Heart right ventricle (tissue), 16 donors: ENCODE measurements at regions of chr12 and their contacts with region 1.

Region 1: GRCh38 chr12:92466391-92467305 is 236.1 kb upstream of the PLEKHG7 start:
- DNase-seq: peak in 1 of 2 donors; percentile 14
- ATAC-seq: peak in 5 of 8 donors; percentile 15 to 53 (median 27)
- H3K4me3 ChIP-seq: no peak overlapping the region
- H3K27ac ChIP-seq: peak overlapping the region in 5 of 10 donors; percentile 24 to 46 (median 28)
- H3K4me1 ChIP-seq: peaks cover 7 to 42% (median 30%) of the 10 kb centered on the region in 9 donors
- H3K27me3 ChIP-seq: no peaks in the 10 kb centered on the region
- CTCF ChIP-seq: no peak

Region 2: DNA sequence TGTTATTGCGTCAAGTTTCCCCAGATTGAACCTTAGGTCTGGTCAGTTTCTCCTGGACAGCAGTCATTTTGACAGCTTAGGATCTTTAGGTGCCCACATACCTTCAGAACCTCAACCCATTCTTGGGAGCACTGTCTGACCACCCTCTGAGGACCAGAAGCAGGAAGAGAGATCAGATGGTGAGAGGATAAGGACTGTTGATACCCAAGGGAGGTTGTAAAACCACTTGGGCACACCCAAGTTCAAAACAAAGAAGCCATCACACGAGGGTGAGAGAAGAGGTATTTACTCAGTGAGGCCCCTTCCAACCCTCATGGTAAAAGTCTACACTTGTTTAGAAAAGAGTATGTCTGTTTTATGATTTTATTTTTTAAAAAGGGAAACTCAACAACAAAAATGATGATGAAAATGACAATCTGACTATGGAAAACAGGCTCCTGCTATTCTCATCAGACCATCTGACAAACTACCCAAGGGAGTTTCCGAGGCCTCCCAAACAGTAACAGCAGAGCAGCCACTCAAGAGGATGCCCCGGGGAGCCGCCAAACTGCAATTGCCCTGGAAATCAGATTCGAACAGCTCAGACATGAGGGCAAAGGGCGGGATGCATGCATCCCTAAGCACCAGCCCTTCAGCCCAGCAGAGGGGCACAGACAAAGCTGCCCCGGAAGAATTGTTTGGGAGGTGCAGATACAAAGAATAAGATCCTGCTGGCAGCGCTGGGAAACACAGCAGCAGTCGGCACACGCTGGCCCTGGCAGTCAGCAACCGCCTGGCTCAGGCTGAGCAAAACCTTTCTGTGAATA is 73.5 kb after region 1 on chr12:
- intact Hi-C with region 1: loop called in 1 of 10 experiments (anchors 5 kb)
- DNase-seq: peak; percentile 26 to 42
- ATAC-seq: peak in 7 of 8 donors; percentile 43 to 65 (median 46)
- H3K4me3 ChIP-seq: no peak overlapping the region
- H3K27ac ChIP-seq: peak overlapping the region in 9 of 10 donors; percentile 44 to 81 (median 65)
- H3K4me1 ChIP-seq: peaks cover 10 to 69% (median 44%) of the 10 kb centered on the region in 9 donors
- H3K27me3 ChIP-seq: no peaks in the 10 kb centered on the region
- CTCF ChIP-seq: peak in 3 of 9 donors; percentile 14 to 24 (median 16)